ENCODE measurements at regions of chr6 and their contacts with region 1.

Region 1: DNA sequence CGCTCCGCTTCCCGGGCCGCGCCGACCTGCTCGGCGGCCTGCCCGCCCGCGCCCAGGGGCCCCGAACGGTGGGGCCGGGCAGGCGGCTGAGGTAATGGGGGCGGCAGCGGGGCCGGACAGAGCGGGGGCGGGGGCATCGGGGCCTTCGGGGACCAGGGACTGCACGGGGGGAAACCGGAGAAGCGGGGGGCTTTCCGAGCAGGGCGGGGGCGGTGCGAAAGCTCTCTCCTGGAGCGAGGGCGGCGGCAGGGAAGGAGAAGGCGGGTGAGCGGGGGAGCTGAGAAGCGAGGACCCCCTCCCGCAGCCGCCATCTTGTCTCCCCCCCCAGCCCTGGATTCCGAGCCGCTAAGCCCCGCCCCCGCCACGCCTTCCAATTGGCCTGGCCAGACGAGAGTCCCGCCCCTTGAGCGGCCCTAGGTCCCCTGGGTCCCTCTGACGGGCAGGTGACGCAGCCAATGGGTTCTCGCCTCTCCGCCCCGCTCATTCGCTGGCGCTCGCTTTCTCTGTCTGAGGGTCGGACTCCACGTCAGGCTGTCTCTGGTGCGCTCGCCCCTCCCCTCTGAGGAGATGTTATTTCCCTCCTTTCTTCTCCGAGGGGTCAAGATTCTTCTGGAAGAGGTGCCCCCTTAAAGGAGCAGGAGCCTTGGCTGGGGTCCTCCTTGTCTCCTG is 470 bp downstream of the BRPF3 start:
- DNase-seq: peak; percentile 99 to 100
- ATAC-seq: peak; percentile 97 to 100 (median 98)
- H3K4me3 ChIP-seq: peak overlapping the region; percentile 40 to 93 (median 71)
- H3K27ac ChIP-seq: peak overlapping the region; percentile 92 to 98 (median 96)
- H3K4me1 ChIP-seq: peaks cover 5 to 31% (median 14%) of the 10 kb centered on the region in 9 donors
- H3K27me3 ChIP-seq: no peaks in the 10 kb centered on the region
- CTCF ChIP-seq: no peak

Region 2: GRCh38 chr6:36027501-36028087 is 169.4 kb before region 1 on chr6 and contains the start of gene MAPK14:
- intact Hi-C with region 1: loop called in 8 of 10 experiments (anchors 2 to 5 kb)
- DNase-seq: peak; percentile 99 to 100
- ATAC-seq: peak; percentile 96 to 98 (median 96)
- H3K4me3 ChIP-seq: peak within 1 kb of the TSS; percentile 82 to 100 (median 96)
- H3K27ac ChIP-seq: peak within 1 kb of the TSS; percentile 84 to 96 (median 94)
- H3K4me1 ChIP-seq: peaks cover 5 to 49% (median 29%) of the 10 kb centered on the region in 9 donors
- H3K27me3 ChIP-seq: peaks cover 0 to 21% (median 18%) of the 10 kb centered on the region in 7 donors
- CTCF ChIP-seq: peak; percentile 86 to 98 (median 91)
- total RNA-seq, gene MAPK14: 25.0 to 38.1 (median 29.4) TPM

Region 3: DNA sequence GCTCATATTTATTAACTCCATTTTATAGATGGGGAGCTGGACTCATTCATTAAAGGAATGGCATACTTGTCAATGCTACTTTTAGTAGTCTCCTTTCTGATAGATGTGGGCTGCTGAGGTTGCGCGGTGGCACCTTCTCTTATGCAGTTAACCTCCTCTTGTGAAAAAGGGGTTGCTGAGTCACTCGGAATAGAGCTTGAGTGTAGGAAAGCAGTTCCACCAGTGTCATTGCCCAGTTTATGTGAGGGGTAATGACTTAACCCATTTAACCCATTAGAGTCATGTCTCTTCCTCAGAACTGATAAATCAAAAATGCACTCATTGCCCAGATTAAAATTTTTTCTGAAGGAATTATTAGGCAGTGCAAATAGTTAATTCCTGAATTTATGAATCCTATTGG is 163.1 kb before region 1 on chr6:
- intact Hi-C with region 1: loop called in 5 of 10 experiments (anchors 5 kb)
- DNase-seq: no peak
- ATAC-seq: peak in 1 of 8 donors; percentile 59
- H3K4me3 ChIP-seq: no peak overlapping the region
- H3K27ac ChIP-seq: peak overlapping the region in 1 of 10 donors; percentile 96
- H3K4me1 ChIP-seq: peaks cover 13 to 96% (median 86%) of the 10 kb centered on the region in 9 donors
- H3K27me3 ChIP-seq: no peaks in the 10 kb centered on the region
- CTCF ChIP-seq: no peak

Region 4: DNA sequence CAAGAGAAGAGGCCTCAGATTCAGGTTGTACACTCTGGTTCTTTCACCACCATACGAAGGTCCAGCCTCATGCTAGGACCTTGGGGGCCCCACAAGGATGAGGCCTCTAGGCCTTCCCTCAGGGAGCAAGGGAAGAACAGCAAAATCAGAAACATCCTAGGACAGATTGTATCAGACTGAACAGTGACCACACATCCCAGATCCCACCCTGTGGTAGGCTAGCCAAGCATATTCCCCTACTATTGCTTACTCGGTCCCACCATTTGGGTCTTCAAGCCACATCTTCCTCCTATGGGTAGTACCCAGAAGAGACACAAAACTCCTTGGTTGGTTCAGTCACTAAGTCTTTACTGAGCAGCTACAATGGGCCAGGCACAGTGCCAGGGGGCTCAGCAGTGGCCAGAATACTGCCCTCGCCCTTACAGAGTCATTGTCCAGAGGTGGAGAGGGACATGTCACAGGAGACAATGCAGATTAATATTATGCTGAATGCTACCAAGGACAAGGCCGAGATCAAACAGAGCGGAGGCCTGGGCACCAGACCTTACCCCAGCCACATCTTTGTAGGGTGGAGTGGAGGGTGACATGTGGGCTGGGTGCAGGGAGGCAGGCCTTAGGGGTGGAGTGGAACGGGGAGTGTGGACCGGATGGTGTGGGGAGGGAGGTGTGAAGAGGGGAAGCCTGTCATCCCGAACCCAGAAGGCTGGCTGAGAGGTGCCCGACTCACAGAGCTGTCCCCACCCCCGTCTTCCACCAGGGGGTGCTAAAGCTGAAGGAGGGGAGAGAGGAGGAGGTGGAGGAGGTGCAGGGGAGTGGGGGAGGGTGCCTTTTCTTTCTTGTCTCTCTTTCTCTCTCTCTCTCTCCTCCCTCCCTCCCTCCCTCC is 73.5 kb before region 1 on chr6:
- intact Hi-C with region 1: loop called in 8 of 10 experiments (anchors 1 to 10 kb)
- DNase-seq: peak; percentile 73 to 76
- ATAC-seq: peak; percentile 72 to 85 (median 82)
- H3K4me3 ChIP-seq: no peak overlapping the region
- H3K27ac ChIP-seq: peak overlapping the region in 1 of 10 donors; percentile 66
- H3K4me1 ChIP-seq: peaks cover 0 to 90% (median 14%) of the 10 kb centered on the region in 9 donors
- H3K27me3 ChIP-seq: peaks cover 0 to 8% (median under 1%) of the 10 kb centered on the region in 7 donors
- CTCF ChIP-seq: peak; percentile 42 to 70 (median 60)

Region 5: DNA sequence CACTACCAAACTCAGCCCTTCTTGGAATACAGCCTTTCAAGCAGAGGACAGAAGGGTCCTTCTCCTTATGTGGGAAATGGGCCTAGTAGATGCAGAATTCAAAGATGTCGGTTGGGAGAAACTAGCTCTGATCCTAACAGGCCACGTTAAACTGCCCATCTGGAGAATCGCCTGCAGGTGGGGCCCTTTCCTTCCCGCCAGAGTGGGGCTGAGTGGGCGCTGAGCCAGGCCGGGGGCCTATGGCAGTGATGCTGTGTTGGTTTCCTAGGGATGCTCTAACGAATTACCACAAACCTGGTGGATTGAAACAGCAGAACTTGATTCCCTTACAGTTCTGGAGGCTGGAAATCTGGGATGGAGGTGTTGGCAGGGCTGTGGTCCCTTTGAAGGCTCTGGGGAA is 57.6 kb before region 1 on chr6:
- intact Hi-C with region 1: loop called in 1 of 10 experiments (anchors 5 kb)
- DNase-seq: no peak
- ATAC-seq: no peak
- H3K4me3 ChIP-seq: no peak overlapping the region
- H3K27ac ChIP-seq: no peak overlapping the region
- H3K4me1 ChIP-seq: peaks cover 0 to 30% (median 6%) of the 10 kb centered on the region in 9 donors
- H3K27me3 ChIP-seq: peaks cover 0 to 16% (median 0%) of the 10 kb centered on the region in 7 donors
- CTCF ChIP-seq: peak in 2 of 9 donors; percentile 6 to 19

Measured in heart right ventricle (tissue), 16 donors.